CD4-positive, alpha-beta memory T cell (primary cell): ENCODE measurements at regions of chr6 and their contacts with region 1.

Region 1: DNA sequence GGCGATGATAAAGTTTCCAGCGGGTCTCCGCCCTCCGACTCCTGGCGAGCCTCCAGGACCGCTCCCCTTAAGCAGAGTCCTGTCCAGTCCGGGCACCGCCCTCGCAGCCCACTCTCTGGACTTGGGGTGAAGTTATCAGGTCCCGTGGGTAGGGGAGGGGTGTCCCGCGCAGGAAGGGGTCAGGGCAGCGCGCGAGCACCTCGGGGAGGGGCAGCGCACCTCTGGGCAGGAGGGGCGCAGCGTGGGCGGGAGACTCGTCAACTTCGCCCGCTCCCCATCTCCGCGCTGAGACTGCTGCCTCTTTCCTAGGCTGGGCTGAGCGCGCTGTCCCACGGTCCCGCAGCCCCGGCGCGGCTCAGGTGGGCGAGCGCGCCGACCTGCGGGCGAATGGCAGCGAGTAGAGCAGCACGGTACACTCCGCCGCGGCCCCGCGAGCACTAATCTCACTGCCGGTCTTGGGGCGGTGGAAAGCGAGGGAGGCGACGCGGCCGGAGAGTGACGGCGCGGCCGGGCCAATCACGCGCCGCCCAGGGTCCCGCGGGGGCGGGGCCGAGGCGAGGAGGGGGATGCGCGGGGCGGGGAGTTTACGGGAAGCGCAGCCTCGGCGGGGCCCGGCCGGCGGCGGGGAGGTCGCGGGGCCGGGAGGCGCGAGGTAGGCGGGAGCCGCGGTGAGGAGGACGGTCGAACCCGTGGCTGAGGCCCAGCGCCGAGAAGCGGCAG is at the start of gene MAN1A1:
- DNase-seq: peak; percentile 85 to 93 (median 91)
- H3K4me3 ChIP-seq: peak within 1 kb of the TSS; percentile 73 to 81
- H3K4me3 Mint-ChIP-seq: peak within 1 kb of the TSS; percentile 86 to 98 (median 94)
- H3K27ac ChIP-seq: peak within 1 kb of the TSS; percentile 88
- H3K27ac Mint-ChIP-seq: peak within 1 kb of the TSS; percentile 83 to 90 (median 88)
- H3K4me1 ChIP-seq: peaks cover 33% of the 10 kb centered on the region
- H3K4me1 Mint-ChIP-seq: peaks cover 31 to 51% (median 37%) of the 10 kb centered on the region in 4 donors
- H3K27me3 ChIP-seq: no peaks in the 10 kb centered on the region
- H3K27me3 Mint-ChIP-seq: no peaks in the 10 kb centered on the region
- total RNA-seq, gene MAN1A1: 12.3 TPM

Region 2: DNA sequence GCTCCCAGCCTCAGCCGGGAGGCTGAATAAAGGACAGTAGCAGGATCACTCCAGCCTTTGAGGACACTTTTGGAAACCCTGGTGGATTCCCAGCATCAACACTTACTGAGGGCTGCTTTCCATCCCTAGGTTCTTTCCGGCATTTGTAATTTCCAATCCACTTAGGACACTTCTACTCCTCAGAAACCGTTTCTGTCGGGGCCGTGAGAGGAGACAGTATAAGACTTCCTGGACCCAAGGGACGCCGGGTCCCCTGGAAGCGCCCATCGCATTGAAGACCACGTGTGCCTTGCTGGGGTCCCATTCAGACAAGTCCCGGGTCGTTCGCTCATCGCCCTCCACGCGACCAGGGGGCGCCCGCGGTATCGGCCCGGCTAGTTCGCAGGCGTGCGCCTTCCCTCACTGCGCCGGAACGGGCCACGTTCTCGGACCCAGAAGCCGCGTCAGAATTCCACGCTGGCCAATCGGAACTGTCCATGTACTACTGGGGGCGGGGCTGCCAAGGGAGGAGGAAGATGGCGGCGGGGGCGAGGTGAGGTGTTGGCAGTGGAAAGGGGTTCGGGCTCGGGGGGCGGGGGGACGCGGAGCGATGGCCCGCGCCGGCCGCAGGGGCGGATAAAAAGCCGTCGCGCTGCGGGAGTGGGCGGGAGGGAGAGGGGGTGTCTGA is 1674.4 kb before region 1 on chr6 and contains the start of gene NUS1:
- CTCF ChIA-PET with region 1: no interaction called
- POLR2A ChIA-PET with region 1: no interaction called
- intact Hi-C with region 1: loop called (anchors 1 kb)
- DNase-seq: peak; percentile 97
- H3K4me3 ChIP-seq: peak within 1 kb of the TSS; percentile 81 to 84
- H3K4me3 Mint-ChIP-seq: peak within 1 kb of the TSS; percentile 89 to 96 (median 93)
- H3K27ac ChIP-seq: peak within 1 kb of the TSS; percentile 67
- H3K27ac Mint-ChIP-seq: peak within 1 kb of the TSS; percentile 85 to 97 (median 95)
- H3K4me1 ChIP-seq: peaks cover 37% of the 10 kb centered on the region
- H3K4me1 Mint-ChIP-seq: peaks cover 38 to 64% (median 52%) of the 10 kb centered on the region in 4 donors
- H3K27me3 ChIP-seq: no peaks in the 10 kb centered on the region
- H3K27me3 Mint-ChIP-seq: no peaks in the 10 kb centered on the region
- total RNA-seq, gene NUS1: 33.0 to 33.2 TPM

Region 3: GRCh38 chr6:118934461-118935330 is 414.8 kb before region 1 on chr6 and contains the start of gene MCM9:
- CTCF ChIA-PET with region 1: no interaction called
- POLR2A ChIA-PET with region 1: interaction called, 3 read pairs
- intact Hi-C with region 1: loop called (anchors 1 kb)
- DNase-seq: peak; percentile 84 to 88 (median 85)
- H3K4me3 ChIP-seq: peak within 1 kb of the TSS; percentile 88 to 98
- H3K4me3 Mint-ChIP-seq: peak within 1 kb of the TSS; percentile 90 to 94 (median 91)
- H3K27ac ChIP-seq: peak within 1 kb of the TSS; percentile 84
- H3K27ac Mint-ChIP-seq: peak within 1 kb of the TSS; percentile 89 to 96 (median 93)
- H3K4me1 ChIP-seq: peaks cover 19% of the 10 kb centered on the region
- H3K4me1 Mint-ChIP-seq: peaks cover 21 to 43% (median 25%) of the 10 kb centered on the region in 4 donors
- H3K27me3 ChIP-seq: no peaks in the 10 kb centered on the region
- H3K27me3 Mint-ChIP-seq: no peaks in the 10 kb centered on the region
- total RNA-seq, gene MCM9: 33.8 to 36.6 TPM

Region 4: GRCh38 chr6:119129148-119129967 is 220.1 kb before region 1 on chr6:
- CTCF ChIA-PET with region 1: interaction called, 5 read pairs
- POLR2A ChIA-PET with region 1: interaction called, 3 read pairs
- intact Hi-C with region 1: loop called (anchors 5 kb)
- DNase-seq: peak in 4 of 5 donors; percentile 48 to 63 (median 54)
- H3K4me3 ChIP-seq: no peak overlapping the region
- H3K4me3 Mint-ChIP-seq: no peak overlapping the region
- H3K27ac ChIP-seq: no peak overlapping the region
- H3K27ac Mint-ChIP-seq: no peak overlapping the region
- H3K4me1 ChIP-seq: peaks cover 4% of the 10 kb centered on the region
- H3K4me1 Mint-ChIP-seq: peaks cover 0 to 3% (median 2%) of the 10 kb centered on the region in 4 donors
- H3K27me3 ChIP-seq: no peaks in the 10 kb centered on the region
- H3K27me3 Mint-ChIP-seq: no peaks in the 10 kb centered on the region

Region 5: GRCh38 chr6:119322715-119323350 is 26.6 kb before region 1 on chr6:
- CTCF ChIA-PET with region 1: interaction called, 5 read pairs
- POLR2A ChIA-PET with region 1: interaction called, 7 read pairs
- intact Hi-C with region 1: loop called (anchors 2 kb)
- DNase-seq: peak; percentile 55 to 68 (median 63)
- H3K4me3 ChIP-seq: no peak overlapping the region
- H3K4me3 Mint-ChIP-seq: peak overlapping the region in 6 of 8 donors; percentile 17 to 68 (median 40)
- H3K27ac ChIP-seq: no peak overlapping the region
- H3K27ac Mint-ChIP-seq: peak overlapping the region in 6 of 7 donors; percentile 19 to 92 (median 70)
- H3K4me1 ChIP-seq: peaks cover 20% of the 10 kb centered on the region
- H3K4me1 Mint-ChIP-seq: peaks cover 18 to 24% (median 20%) of the 10 kb centered on the region in 4 donors
- H3K27me3 ChIP-seq: no peaks in the 10 kb centered on the region
- H3K27me3 Mint-ChIP-seq: no peaks in the 10 kb centered on the region

Region 6: DNA sequence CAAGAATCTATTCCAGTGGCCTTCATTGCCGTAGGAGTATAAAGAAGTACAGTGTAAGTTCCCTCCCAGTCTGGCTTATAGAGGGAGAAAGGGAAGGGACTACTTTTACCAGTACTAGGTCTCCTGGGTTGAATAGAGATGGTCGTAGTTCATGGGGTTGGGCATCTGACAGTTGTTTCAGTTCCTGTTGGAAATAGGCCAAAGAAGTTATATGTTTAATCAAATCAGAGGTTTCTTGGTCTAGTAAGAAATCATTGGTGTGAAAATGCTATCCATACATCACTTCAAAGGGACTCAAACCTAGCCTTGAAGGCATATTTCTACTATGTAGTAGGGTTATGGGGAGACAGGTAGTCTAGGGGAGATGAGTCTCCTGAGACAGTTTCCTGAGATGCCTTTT is 45.7 kb after region 1 on chr6:
- CTCF ChIA-PET with region 1: no interaction called
- POLR2A ChIA-PET with region 1: no interaction called
- intact Hi-C with region 1: no loop called
- DNase-seq: no peak
- H3K4me3 ChIP-seq: no peak overlapping the region
- H3K4me3 Mint-ChIP-seq: no peak overlapping the region
- H3K27ac ChIP-seq: no peak overlapping the region
- H3K27ac Mint-ChIP-seq: no peak overlapping the region
- H3K4me1 ChIP-seq: no peaks in the 10 kb centered on the region
- H3K4me1 Mint-ChIP-seq: no peaks in the 10 kb centered on the region
- H3K27me3 ChIP-seq: no peaks in the 10 kb centered on the region
- H3K27me3 Mint-ChIP-seq: no peaks in the 10 kb centered on the region

Region 7: GRCh38 chr6:119647309-119647708 is 297.8 kb after region 1 on chr6:
- CTCF ChIA-PET with region 1: no interaction called
- POLR2A ChIA-PET with region 1: no interaction called
- intact Hi-C with region 1: no loop called
- DNase-seq: no peak
- H3K4me3 ChIP-seq: no peak overlapping the region
- H3K4me3 Mint-ChIP-seq: no peak overlapping the region
- H3K27ac ChIP-seq: no peak overlapping the region
- H3K27ac Mint-ChIP-seq: no peak overlapping the region
- H3K4me1 ChIP-seq: no peaks in the 10 kb centered on the region
- H3K4me1 Mint-ChIP-seq: no peaks in the 10 kb centered on the region
- H3K27me3 ChIP-seq: no peaks in the 10 kb centered on the region
- H3K27me3 Mint-ChIP-seq: no peaks in the 10 kb centered on the region

Region 8: GRCh38 chr6:121334299-121335086 is 1985.0 kb after region 1 on chr6 and contains the start of gene TBC1D32:
- CTCF ChIA-PET with region 1: no interaction called
- POLR2A ChIA-PET with region 1: no interaction called
- intact Hi-C with region 1: loop called (anchors 2 kb)
- DNase-seq: peak; percentile 87 to 91 (median 89)
- H3K4me3 ChIP-seq: peak within 1 kb of the TSS; percentile 91 to 96
- H3K4me3 Mint-ChIP-seq: peak within 1 kb of the TSS; percentile 93 to 99 (median 97)
- H3K27ac ChIP-seq: peak within 1 kb of the TSS; percentile 98
- H3K27ac Mint-ChIP-seq: peak within 1 kb of the TSS; percentile 95 to 100 (median 99)
- H3K4me1 ChIP-seq: peaks cover 29% of the 10 kb centered on the region
- H3K4me1 Mint-ChIP-seq: peaks cover 14 to 38% (median 23%) of the 10 kb centered on the region in 4 donors
- H3K27me3 ChIP-seq: no peaks in the 10 kb centered on the region
- H3K27me3 Mint-ChIP-seq: no peaks in the 10 kb centered on the region
- total RNA-seq, gene TBC1D32: 11.2 to 13.2 TPM